Activated CD8-positive, alpha-beta T cell treated with anti-CD3 and anti-CD28 coated beads for 36 hours (primary cell): ENCODE measurements at regions of chr15 and their contacts with region 1.

Region 1: GRCh38 chr15:33700695-33701304 is 267.5 kb upstream of the CHRM5 start:
- DNase-seq: peak; percentile 76
- ATAC-seq: peak; percentile 80
- H3K4me3 Mint-ChIP-seq: no peak overlapping the region
- H3K27ac Mint-ChIP-seq: no peak overlapping the region
- H3K4me1 Mint-ChIP-seq: no peaks in the 10 kb centered on the region
- H3K27me3 Mint-ChIP-seq: peaks cover 2% of the 10 kb centered on the region
- CTCF ChIP-seq: peak; percentile 90

Region 2: DNA sequence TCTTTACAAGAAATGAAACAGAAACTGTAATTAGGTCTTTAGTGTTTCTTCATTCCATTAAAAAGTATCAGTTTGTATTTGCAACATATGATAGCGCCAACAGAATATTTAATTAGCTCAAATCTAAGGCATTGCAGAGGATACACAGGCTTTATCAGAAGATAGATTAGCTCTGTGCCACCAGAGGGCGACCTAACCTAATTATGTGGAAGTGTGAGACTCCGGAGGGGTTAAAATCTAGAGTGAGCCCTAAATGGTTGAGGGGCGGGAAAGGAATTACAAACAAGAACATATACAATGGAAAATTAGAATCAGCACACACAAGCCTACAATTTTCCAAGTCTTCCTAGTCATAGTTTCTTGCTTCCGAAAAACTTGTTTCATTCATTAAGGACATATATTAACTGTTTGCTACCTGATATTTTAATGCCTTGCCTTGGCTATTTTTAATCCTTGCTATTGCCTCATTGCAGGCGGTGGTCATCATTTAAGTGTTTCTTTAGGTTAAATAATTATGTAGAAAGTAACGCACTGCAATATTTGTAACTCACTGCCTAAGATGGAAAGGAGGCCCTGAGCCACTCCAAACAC is 408.0 kb before region 1 on chr15:
- CTCF ChIA-PET with region 1: interaction called, 49 read pairs
- POLR2A ChIA-PET with region 1: no interaction called
- intact Hi-C with region 1: no loop called
- DNase-seq: peak; percentile 73
- ATAC-seq: peak; percentile 49
- H3K4me3 Mint-ChIP-seq: no peak overlapping the region
- H3K27ac Mint-ChIP-seq: no peak overlapping the region
- H3K4me1 Mint-ChIP-seq: no peaks in the 10 kb centered on the region
- H3K27me3 Mint-ChIP-seq: peaks cover 7% of the 10 kb centered on the region
- CTCF ChIP-seq: peak; percentile 68

Region 3: GRCh38 chr15:33309602-33310276 is 391.1 kb before region 1 on chr15:
- CTCF ChIA-PET with region 1: interaction called, 3 read pairs
- POLR2A ChIA-PET with region 1: no interaction called
- intact Hi-C with region 1: loop called (anchors 5 kb)
- DNase-seq: no peak
- ATAC-seq: no peak
- H3K4me3 Mint-ChIP-seq: no peak overlapping the region
- H3K27ac Mint-ChIP-seq: no peak overlapping the region
- H3K4me1 Mint-ChIP-seq: no peaks in the 10 kb centered on the region
- H3K27me3 Mint-ChIP-seq: peaks cover 36% of the 10 kb centered on the region
- CTCF ChIP-seq: no peak

Region 4: GRCh38 chr15:33654860-33655259 is 45.9 kb before region 1 on chr15:
- CTCF ChIA-PET with region 1: no interaction called
- POLR2A ChIA-PET with region 1: no interaction called
- intact Hi-C with region 1: no loop called
- DNase-seq: no peak
- ATAC-seq: no peak
- H3K4me3 Mint-ChIP-seq: no peak overlapping the region
- H3K27ac Mint-ChIP-seq: no peak overlapping the region
- H3K4me1 Mint-ChIP-seq: no peaks in the 10 kb centered on the region
- H3K27me3 Mint-ChIP-seq: peaks cover 1% of the 10 kb centered on the region
- CTCF ChIP-seq: no peak

Region 5: GRCh38 chr15:33716025-33716424 is 15.2 kb after region 1 on chr15:
- CTCF ChIA-PET with region 1: interaction called, 10 read pairs
- POLR2A ChIA-PET with region 1: no interaction called
- intact Hi-C with region 1: no loop called
- DNase-seq: peak; percentile 42
- ATAC-seq: peak; percentile 75
- H3K4me3 Mint-ChIP-seq: no peak overlapping the region
- H3K27ac Mint-ChIP-seq: no peak overlapping the region
- H3K4me1 Mint-ChIP-seq: peaks cover 7% of the 10 kb centered on the region
- H3K27me3 Mint-ChIP-seq: peaks cover 5% of the 10 kb centered on the region
- CTCF ChIP-seq: no peak

Region 6: DNA sequence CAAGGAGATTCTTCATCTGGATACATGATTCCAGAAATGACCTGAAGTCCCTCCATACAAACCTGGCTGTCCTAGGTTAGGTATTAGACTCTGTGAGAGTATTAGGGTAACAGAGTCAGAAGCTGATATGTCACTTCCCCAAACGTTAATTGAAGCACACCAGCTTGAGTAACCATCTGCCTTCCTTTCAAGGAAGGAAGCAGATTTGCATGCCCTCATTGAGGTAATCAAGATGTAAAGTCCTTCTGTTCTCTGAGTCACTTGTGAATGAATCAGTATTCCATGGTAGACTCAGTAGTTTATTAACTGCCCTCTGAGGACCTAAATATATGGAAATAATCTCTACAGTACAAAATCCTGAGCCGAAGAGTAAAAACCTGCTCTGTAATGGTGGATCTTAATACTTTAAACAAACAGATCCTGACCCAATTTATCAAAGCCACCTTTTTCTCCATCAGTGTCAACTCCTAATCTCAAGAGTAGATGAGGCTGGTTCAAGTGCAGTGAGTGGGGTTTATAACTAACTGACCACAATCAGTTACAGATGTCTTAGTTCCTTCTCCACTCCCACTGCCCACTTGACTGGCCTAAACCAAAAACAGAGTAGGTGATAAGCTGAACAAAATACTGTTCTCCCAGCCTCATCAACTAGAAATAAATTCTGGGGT is 21.3 kb after region 1 on chr15:
- CTCF ChIA-PET with region 1: interaction called, 10 read pairs
- POLR2A ChIA-PET with region 1: no interaction called
- intact Hi-C with region 1: no loop called
- DNase-seq: no peak
- ATAC-seq: no peak
- H3K4me3 Mint-ChIP-seq: no peak overlapping the region
- H3K27ac Mint-ChIP-seq: no peak overlapping the region
- H3K4me1 Mint-ChIP-seq: no peaks in the 10 kb centered on the region
- H3K27me3 Mint-ChIP-seq: peaks cover 3% of the 10 kb centered on the region
- CTCF ChIP-seq: no peak

Region 7: DNA sequence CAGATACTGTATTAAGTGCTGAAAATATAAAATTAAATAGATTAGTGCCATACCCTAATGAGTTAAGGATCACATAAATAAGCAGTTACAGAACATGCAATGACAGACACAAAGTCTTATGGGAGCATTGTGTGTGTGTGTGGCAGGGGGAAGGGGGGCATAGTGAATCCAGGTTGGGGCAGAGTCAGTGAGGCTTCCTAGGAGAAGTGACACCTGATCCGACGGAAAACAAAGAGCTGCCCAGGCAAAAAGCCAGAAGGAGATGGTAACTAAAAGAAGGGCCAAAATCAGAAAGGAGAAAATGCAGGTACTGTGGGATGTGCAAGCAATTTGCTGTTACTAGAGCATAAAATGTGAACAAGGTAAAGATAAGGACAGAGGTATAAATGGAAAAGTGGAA is 187.4 kb after region 1 on chr15:
- CTCF ChIA-PET with region 1: no interaction called
- POLR2A ChIA-PET with region 1: no interaction called
- intact Hi-C with region 1: no loop called
- DNase-seq: no peak
- ATAC-seq: no peak
- H3K4me3 Mint-ChIP-seq: no peak overlapping the region
- H3K27ac Mint-ChIP-seq: no peak overlapping the region
- H3K4me1 Mint-ChIP-seq: no peaks in the 10 kb centered on the region
- H3K27me3 Mint-ChIP-seq: no peaks in the 10 kb centered on the region
- CTCF ChIP-seq: no peak

Region 8: DNA sequence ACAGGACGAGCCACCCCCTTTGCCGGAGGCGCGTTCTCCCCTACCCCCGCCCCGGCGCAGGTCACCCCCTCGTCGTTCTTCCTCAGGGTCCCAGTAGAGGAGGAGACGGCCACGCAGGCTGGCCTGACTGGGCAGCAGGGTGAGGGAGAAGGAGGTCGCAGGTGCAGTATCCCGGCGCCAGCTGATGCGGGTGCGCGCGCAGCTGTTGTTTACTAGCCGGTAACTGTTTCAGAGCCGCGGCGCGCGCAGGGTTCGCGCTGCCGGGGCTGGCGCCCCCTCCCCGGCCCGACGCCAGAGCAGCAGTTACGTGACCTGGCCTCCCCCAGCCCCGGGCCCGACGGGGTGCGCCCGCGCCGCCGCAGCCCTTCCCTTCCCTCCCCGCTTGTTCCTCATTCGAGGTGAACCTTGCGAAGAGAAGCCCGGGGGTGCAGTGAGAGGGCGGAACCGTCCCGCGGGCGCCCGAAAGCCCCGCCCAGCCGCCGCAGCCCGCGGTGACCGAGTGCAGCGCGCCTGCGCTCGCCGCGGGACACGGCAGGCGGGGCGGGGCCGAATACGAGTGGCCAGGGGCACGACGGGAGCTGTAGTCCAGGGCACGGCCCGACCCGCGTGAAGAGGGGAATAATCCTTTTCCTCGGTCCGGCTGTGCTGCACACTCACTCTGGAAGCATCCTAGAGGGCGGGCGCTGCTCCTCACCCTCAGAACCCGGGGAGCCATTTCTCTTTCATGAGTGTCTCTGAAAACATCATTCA is 636.9 kb after region 1 on chr15 and contains the start of gene SLC12A6:
- CTCF ChIA-PET with region 1: no interaction called
- POLR2A ChIA-PET with region 1: no interaction called
- intact Hi-C with region 1: no loop called
- DNase-seq: peak; percentile 91
- ATAC-seq: peak; percentile 85
- H3K4me3 Mint-ChIP-seq: peak within 1 kb of the TSS; percentile 99
- H3K27ac Mint-ChIP-seq: peak within 1 kb of the TSS; percentile 95
- H3K4me1 Mint-ChIP-seq: peaks cover 49% of the 10 kb centered on the region
- H3K27me3 Mint-ChIP-seq: no peaks in the 10 kb centered on the region
- CTCF ChIP-seq: no peak
- total RNA-seq, gene SLC12A6: 22.2 to 24.8 TPM